Psoas muscle (tissue), 8 donors: ENCODE measurements at regions of chr2 and their contacts with region 1.

Region 1: DNA sequence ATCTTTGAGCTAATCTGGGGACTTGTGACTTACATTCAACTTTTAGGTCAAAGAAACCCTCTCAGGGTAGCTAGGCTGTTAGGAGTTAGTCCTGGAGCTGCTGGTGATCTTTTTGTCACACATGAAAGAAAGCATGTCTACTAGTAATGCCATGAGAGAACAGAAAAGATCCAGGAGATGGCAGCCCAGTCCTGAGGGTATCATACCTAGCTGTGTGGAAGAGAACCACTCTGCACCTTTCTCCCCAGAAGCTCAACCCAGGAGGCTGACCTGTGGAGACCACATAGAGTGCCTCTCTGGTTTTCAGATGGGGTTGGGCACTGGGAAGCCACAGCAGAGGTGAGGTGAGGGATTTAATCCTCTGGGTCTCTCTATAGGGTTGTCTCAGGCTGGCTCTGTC is 460.2 kb upstream of the UBE2E3 start:
- DNase-seq: no peak
- ATAC-seq: peak in 3 of 4 donors; percentile 47 to 64 (median 58)
- H3K4me3 ChIP-seq: no peak overlapping the region
- H3K27ac ChIP-seq: no peak overlapping the region
- H3K4me1 ChIP-seq: no peaks in the 10 kb centered on the region
- H3K27me3 ChIP-seq: no peaks in the 10 kb centered on the region
- CTCF ChIP-seq: peak; percentile 20

Region 2: DNA sequence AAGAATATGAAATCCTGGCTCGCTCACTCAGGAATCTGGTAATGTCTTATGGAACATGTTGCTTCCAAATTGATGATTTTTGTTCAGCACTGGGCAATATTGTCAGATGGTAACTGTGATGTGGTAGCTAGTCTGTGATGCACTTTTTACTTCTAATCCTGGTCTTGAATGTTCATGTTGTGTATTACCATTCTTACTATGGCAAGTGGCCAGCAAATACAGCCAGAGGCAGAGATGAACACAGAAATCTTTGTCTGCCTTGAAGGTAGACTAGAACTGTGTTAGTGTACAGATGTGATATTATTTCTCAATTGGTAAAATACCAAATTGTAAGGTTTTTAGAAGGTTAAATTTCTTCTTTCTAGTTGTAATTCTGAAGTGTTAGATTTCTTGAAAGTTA is 543.5 kb after region 1 on chr2:
- intact Hi-C with region 1: loop called (anchors 10 kb)
- DNase-seq: no peak
- ATAC-seq: no peak
- H3K4me3 ChIP-seq: no peak overlapping the region
- H3K27ac ChIP-seq: no peak overlapping the region
- H3K4me1 ChIP-seq: no peaks in the 10 kb centered on the region
- H3K27me3 ChIP-seq: no peaks in the 10 kb centered on the region
- CTCF ChIP-seq: no peak